ENCODE measurements at regions of chr2 and their contacts with region 1.

Region 1: DNA sequence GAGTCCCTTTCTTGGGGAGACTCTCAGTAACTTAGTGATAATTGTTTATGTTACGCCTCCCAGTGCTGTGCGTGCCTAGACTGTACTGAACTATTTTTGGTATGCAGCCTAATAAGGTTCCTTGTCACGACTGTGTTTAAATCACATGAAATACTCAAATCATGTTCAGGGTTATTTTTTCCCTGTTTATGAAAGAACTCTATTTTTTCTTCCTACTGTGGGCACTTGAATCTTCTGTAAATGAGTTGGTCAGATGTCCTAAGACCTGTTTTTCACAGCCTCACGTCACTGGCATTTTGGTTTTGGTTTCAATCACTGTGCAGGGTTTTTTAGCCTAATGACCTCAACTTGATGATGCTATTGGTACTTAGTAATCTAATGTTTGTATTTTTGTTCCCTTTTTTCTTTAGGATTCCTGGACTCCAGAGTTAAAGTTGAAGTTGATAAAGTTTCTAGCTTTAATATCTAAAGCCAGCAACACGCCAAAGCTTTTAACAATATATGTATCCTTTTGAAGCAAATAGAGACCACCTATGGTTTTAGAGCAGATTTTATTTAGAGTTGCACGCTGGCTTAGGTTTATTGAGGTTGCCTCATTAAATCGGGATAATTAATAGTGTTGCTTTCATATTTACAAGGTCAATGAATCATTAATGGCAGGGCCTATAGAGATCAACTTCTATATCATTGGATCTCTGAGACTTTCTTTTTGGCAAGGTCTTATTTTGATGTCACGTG is 24.1 kb downstream of the ARMC9 start:
- DNase-seq: peak in 1 of 7 donors; percentile 59
- H3K4me3 ChIP-seq: no peak overlapping the region
- H3K27ac ChIP-seq: peak overlapping the region in 3 of 5 donors; percentile 11 to 36 (median 26)
- H3K4me1 ChIP-seq: peaks cover 0 to 10% of the 10 kb centered on the region in 2 donors
- H3K27me3 ChIP-seq: no peaks in the 10 kb centered on the region
- CTCF ChIP-seq: no peak
- POLR2A ChIP-seq: no peak

Region 2: DNA sequence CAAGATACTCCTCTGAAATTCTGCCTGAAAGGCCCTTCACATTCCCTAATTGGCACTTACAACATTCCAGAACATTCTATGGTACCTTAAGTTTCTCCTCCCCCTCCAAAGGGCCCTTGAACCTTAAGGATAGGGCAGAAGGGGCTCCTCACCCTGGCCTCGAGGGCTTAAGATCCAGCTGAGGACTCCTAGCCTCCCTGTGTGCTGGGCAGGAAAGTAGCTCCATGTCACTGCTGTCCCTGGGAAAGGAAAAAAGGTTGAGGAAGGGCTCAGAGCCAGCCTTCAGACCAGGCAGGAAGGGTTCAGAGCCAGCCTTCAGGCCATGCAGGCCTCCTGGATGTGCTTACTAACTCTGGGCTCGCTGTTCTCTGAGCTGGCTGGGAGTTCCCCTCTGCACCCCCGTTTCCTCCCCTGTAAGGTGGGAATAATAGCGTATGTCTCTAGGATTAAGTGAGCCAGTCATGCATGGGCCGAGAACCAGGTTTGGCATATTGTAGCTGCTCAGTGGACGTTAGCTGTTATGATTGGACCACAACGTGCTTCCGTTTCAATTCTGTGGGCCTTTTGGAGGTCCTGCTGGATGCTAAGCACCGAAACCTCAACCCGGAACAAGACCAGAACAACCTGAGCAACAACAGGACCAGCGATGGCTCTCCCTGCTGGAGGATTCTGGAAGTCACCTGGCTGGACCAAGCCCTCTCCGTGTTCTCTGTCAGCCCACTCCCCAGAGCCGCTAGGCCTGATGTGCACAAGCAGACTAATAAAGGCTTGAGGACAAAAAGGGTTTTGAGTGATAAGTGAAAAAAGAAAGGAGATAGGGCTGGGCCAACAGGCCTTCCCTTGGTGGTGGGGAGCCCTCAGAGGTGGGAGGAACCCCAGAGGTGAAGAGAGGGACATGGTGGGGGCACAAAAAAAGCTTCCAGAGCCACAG is 172.0 kb after region 1 on chr2:
- intact Hi-C with region 1: loop called in 1 of 2 experiments (anchors 5 kb)
- DNase-seq: peak in 2 of 7 donors; percentile 10 to 21
- H3K4me3 ChIP-seq: peak overlapping the region in 1 of 4 donors; percentile 94
- H3K27ac ChIP-seq: peak overlapping the region in 2 of 5 donors; percentile 59 to 79
- H3K4me1 ChIP-seq: peaks cover 20 to 25% of the 10 kb centered on the region in 2 donors
- H3K27me3 ChIP-seq: no peaks in the 10 kb centered on the region
- CTCF ChIP-seq: peak in 2 of 6 experiments; percentile 14 to 18
- POLR2A ChIP-seq: no peak

Region 3: DNA sequence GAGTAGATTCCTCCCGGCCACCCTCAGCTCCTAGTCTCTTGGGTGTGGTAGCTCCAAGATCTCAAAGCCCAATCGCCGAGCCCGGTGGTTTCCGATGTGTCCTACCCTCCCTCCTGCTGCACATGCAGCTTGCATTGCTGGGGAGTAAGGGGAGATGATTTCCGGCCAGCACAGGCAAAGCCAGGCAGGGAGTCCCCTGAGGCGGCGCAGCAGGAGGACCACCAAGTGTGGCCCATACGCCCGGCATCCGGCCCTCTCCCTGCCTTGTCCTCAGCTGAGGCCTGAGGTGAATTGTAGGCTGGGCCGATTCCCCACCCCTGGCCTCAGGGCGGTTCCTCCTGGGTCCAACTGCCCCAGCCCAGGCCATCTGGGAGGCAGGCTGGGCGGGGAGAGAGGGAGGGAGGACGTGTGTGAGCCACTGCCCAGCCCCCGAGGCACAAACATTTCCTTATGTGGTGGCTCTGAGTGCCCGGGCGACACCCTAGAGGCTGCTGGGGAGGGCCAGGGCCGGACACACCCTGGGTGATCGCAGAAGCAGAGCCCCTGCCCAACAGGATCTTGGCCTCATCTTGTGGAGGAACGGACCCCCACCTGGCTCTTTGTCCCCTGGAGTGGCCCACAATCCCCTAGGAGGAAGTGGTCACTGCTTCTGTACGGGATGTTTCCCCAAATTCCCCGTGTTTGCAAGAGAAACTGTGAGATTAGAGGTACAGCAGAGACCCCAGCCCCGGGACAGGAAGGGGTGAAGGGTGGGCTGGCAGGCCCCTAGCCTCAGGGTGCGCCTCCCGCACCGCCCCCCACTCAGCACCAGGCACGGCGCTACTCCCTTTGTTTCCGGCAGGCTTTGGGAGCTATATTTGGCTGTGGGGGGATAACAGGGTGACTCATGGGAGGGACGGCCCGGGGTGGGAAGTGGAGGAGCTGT is 443.9 kb after region 1 on chr2:
- intact Hi-C with region 1: no loop called
- DNase-seq: peak; percentile 71 to 95 (median 78)
- H3K4me3 ChIP-seq: peak overlapping the region in 1 of 4 donors; percentile 48
- H3K27ac ChIP-seq: peak overlapping the region; percentile 56 to 96 (median 88)
- H3K4me1 ChIP-seq: peaks cover 0 to 17% of the 10 kb centered on the region in 2 donors
- H3K27me3 ChIP-seq: no peaks in the 10 kb centered on the region
- CTCF ChIP-seq: peak in 1 of 6 experiments; percentile 15
- POLR2A ChIP-seq: peak; percentile 49 to 55